K562 (cell line): ENCODE measurements at regions of chr17 and their contacts with region 1.

Region 1: GRCh38 chr17:12667299-12667958 is 1.7 kb downstream of the MYOCD start:
- DNase-seq: peak in 2 of 4 experiments; percentile 11 to 34
- ATAC-seq: peak; percentile 47; the same call in 1 of the 3 replicates
- H3K4me3 ChIP-seq: no peak overlapping the region
- H3K27ac ChIP-seq: no peak overlapping the region
- H3K4me1 ChIP-seq: no peaks in the 10 kb centered on the region; a peak in 1 of 5 replicates
- H3K27me3 ChIP-seq: peaks cover 0 to 17% of the 10 kb centered on the region in 2 experiments; a peak in 3 of 5 replicates
- CTCF ChIP-seq: peak; percentile 14 to 40 (median 32); a peak in 2 of 6 replicates
- EP300 ChIP-seq: no peak
- POLR2A ChIP-seq: no peak
- RAD21 ChIP-seq: peak in 1 of 2 experiments; percentile 43; a peak in 2 of 4 replicates

Region 2: DNA sequence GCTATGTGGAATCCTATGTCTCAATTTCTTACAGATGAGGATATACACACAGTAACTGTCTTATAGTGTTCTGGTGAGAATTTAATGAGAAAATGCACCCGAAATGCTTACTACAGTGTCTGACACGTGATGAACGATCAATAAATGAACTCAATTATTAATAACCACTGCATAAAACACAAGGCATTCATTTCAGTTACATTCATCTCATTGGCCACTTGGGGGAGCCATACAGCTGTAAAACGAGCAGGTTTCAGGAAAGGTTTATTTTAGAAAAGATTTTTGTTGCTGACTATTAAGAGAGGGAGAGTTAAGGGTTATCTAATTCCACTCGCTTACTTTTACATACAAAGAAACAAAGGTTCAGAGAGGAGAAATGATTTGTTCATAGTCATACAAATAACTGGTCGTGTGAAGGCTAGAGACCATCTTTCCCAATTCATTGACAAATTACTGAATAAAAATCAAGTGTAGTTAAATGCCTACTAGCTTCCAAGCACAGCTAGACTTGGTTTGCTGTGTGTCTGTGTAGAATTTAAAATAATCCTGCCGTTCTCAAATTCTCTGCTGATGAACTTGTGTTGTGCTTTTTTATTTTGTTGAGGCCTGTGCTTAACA is 486.7 kb before region 1 on chr17:
- CTCF ChIA-PET with region 1: interaction called, 4 read pairs
- POLR2A ChIA-PET with region 1: no interaction called
- in situ Hi-C with region 1: no loop called
- intact Hi-C with region 1: loop called (anchors 2 kb)
- DNase-seq: peak; percentile 23 to 58 (median 28)
- ATAC-seq: peak; percentile 61
- H3K4me3 ChIP-seq: no peak overlapping the region
- H3K27ac ChIP-seq: no peak overlapping the region
- H3K4me1 ChIP-seq: no peaks in the 10 kb centered on the region
- H3K27me3 ChIP-seq: no peaks in the 10 kb centered on the region; a peak in 1 of 5 replicates
- CTCF ChIP-seq: peak; percentile 42 to 73 (median 61); a peak in 5 of 6 replicates
- EP300 ChIP-seq: no peak
- POLR2A ChIP-seq: no peak
- RAD21 ChIP-seq: peak; percentile 50 to 70

Region 3: DNA sequence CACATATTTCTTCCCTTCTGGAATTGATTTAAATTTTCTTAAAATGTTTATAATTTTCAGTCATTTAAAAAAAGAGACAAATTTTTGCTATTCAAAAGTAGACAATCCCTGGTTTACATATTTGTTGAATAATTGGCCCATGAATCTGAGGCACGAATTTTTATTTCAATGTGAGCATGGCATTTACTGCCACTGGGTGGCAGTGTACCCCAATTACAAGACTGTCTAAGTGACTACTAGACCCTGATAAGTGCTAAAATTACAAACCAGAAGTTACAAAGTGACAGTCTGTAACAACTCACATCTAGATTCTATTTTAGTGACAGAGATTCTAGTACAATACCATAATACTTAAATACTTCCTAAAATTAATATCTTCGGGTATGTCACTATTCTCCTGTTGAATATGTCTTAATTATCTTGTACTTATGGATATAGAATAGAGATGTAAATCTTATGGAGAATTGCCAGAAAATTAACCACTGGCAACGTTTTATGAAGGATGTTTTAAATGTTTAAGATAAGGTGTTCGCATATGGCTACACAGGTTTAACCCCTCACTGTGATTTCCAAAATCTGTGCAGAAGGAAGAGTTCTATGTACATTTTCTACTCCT is 410.9 kb before region 1 on chr17:
- CTCF ChIA-PET with region 1: interaction called, 3 read pairs
- POLR2A ChIA-PET with region 1: interaction called, 3 read pairs
- in situ Hi-C with region 1: loop called (anchors 10 kb)
- intact Hi-C with region 1: loop called (anchors 5 kb)
- DNase-seq: peak; percentile 23 to 43 (median 30)
- ATAC-seq: peak; percentile 47; the same call in 1 of the 3 replicates
- H3K4me3 ChIP-seq: no peak overlapping the region
- H3K27ac ChIP-seq: no peak overlapping the region
- H3K4me1 ChIP-seq: no peaks in the 10 kb centered on the region
- H3K27me3 ChIP-seq: peaks cover 0 to 6% of the 10 kb centered on the region in 2 experiments; a peak in 2 of 5 replicates
- CTCF ChIP-seq: peak; percentile 35 to 64 (median 52); a peak in 3 of 6 replicates
- EP300 ChIP-seq: no peak
- POLR2A ChIP-seq: no peak
- RAD21 ChIP-seq: peak; percentile 47 to 66

Region 4: GRCh38 chr17:12342609-12343435 is 324.6 kb before region 1 on chr17:
- CTCF ChIA-PET with region 1: no interaction called
- POLR2A ChIA-PET with region 1: no interaction called
- in situ Hi-C with region 1: no loop called
- intact Hi-C with region 1: loop called (anchors 2 kb)
- DNase-seq: peak; percentile 20 to 50 (median 46)
- ATAC-seq: peak; percentile 64; the same call in 2 of the 3 replicates
- H3K4me3 ChIP-seq: no peak overlapping the region
- H3K27ac ChIP-seq: no peak overlapping the region
- H3K4me1 ChIP-seq: no peaks in the 10 kb centered on the region
- H3K27me3 ChIP-seq: no peaks in the 10 kb centered on the region
- CTCF ChIP-seq: peak; percentile 18 to 55 (median 40); a peak in 5 of 6 replicates
- EP300 ChIP-seq: no peak
- POLR2A ChIP-seq: no peak
- RAD21 ChIP-seq: no peak

Region 5: DNA sequence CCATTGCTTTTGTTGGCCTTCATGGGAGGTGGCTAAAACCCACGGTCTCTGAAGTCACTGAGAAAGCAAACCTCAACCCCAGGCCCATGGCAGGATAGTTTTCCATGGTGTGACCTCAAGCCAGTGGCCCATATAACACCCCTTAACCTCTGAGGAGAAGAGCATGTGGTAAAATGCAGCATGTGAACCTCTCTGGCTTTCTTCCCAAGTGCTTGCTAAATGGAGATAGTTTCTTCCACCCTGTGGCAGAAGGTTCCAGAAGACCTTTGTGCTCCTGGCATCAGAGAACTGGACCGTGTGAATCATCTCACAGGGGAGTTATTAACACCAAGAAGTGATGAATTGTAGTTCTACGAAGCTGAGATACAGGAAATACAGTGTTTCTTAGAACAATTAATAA is 45.5 kb after region 1 on chr17:
- CTCF ChIA-PET with region 1: no interaction called
- POLR2A ChIA-PET with region 1: no interaction called
- in situ Hi-C with region 1: no loop called
- intact Hi-C with region 1: no loop called
- DNase-seq: no peak
- ATAC-seq: no peak
- H3K4me3 ChIP-seq: no peak overlapping the region
- H3K27ac ChIP-seq: no peak overlapping the region
- H3K4me1 ChIP-seq: no peaks in the 10 kb centered on the region
- H3K27me3 ChIP-seq: no peaks in the 10 kb centered on the region
- CTCF ChIP-seq: no peak
- EP300 ChIP-seq: no peak
- POLR2A ChIP-seq: no peak
- RAD21 ChIP-seq: no peak

Region 6: GRCh38 chr17:12730931-12731521 is 63.6 kb after region 1 on chr17:
- CTCF ChIA-PET with region 1: no interaction called
- POLR2A ChIA-PET with region 1: no interaction called
- in situ Hi-C with region 1: no loop called
- intact Hi-C with region 1: no loop called
- DNase-seq: peak in 1 of 4 experiments; percentile 2
- ATAC-seq: no peak
- H3K4me3 ChIP-seq: no peak overlapping the region
- H3K27ac ChIP-seq: no peak overlapping the region
- H3K4me1 ChIP-seq: no peaks in the 10 kb centered on the region; a peak in 1 of 5 replicates
- H3K27me3 ChIP-seq: no peaks in the 10 kb centered on the region; a peak in 1 of 5 replicates
- CTCF ChIP-seq: no peak
- EP300 ChIP-seq: no peak
- POLR2A ChIP-seq: no peak
- RAD21 ChIP-seq: no peak